OCI-LY7 (cell line): ENCODE measurements at regions of chr14 and their contacts with region 1.

Region 1: GRCh38 chr14:19851365-19851764 is 23.6 kb upstream of the OR4K2 start:
- DNase-seq: no peak
- H3K4me3 ChIP-seq: no peak overlapping the region
- H3K27ac ChIP-seq: no peak overlapping the region
- H3K4me1 ChIP-seq: no peaks in the 10 kb centered on the region
- CTCF ChIP-seq: no peak

Region 2: GRCh38 chr14:19771895-19772430 is 79.4 kb before region 1 on chr14:
- CTCF ChIA-PET with region 1: no interaction called
- POLR2A ChIA-PET with region 1: no interaction called
- intact Hi-C with region 1: no loop called
- DNase-seq: no peak
- H3K4me3 ChIP-seq: no peak overlapping the region
- H3K27ac ChIP-seq: no peak overlapping the region
- H3K4me1 ChIP-seq: no peaks in the 10 kb centered on the region
- CTCF ChIP-seq: no peak

Region 3: GRCh38 chr14:19800282-19801117 is 50.9 kb before region 1 on chr14:
- CTCF ChIA-PET with region 1: no interaction called
- POLR2A ChIA-PET with region 1: no interaction called
- intact Hi-C with region 1: no loop called
- DNase-seq: no peak
- H3K4me3 ChIP-seq: no peak overlapping the region
- H3K27ac ChIP-seq: no peak overlapping the region
- H3K4me1 ChIP-seq: no peaks in the 10 kb centered on the region
- CTCF ChIP-seq: no peak

Region 4: DNA sequence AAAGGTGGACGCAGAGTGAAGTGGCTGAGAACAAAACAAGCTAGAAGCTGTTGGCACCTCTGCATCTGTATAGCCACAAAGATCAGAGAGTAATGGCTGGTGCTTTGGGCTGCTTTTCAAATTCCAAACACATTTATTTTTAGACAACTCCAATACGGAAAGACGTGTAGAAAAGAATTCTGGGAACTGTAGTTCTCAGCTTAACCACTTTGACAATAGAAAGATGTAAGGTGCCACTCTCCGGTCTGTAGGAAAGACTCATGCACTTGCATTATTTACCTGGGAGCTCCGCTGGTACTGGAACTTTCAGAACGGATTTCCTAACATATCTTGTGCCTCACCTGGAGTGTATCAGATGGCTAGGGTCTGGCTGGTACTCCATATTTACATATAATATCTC is 21.8 kb after region 1 on chr14:
- CTCF ChIA-PET with region 1: no interaction called
- POLR2A ChIA-PET with region 1: no interaction called
- intact Hi-C with region 1: loop called (anchors 2 kb)
- DNase-seq: no peak
- H3K4me3 ChIP-seq: no peak overlapping the region
- H3K27ac ChIP-seq: no peak overlapping the region
- H3K4me1 ChIP-seq: no peaks in the 10 kb centered on the region
- CTCF ChIP-seq: no peak

Region 5: DNA sequence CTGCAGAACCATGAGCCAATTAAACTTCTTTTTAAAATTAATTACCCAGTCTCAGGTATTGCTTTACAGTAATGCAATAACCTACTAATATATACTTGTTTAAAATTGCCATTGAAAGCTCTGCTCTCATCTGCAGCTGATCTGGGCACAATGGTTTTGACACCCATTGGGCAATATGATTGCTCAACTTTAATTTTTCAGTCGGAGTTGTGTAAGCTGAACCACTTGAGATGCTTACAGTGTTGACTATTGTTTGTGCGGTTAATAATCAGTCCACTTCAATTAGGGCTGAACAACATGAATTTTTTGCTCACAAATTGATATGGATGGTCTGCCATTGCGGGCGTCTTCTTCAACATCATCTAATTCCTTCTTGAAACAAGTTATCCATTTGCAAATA is 51.0 kb after region 1 on chr14:
- CTCF ChIA-PET with region 1: no interaction called
- POLR2A ChIA-PET with region 1: no interaction called
- intact Hi-C with region 1: loop called (anchors 10 kb)
- DNase-seq: no peak
- H3K4me3 ChIP-seq: no peak overlapping the region
- H3K27ac ChIP-seq: no peak overlapping the region
- H3K4me1 ChIP-seq: no peaks in the 10 kb centered on the region
- CTCF ChIP-seq: no peak

Region 6: DNA sequence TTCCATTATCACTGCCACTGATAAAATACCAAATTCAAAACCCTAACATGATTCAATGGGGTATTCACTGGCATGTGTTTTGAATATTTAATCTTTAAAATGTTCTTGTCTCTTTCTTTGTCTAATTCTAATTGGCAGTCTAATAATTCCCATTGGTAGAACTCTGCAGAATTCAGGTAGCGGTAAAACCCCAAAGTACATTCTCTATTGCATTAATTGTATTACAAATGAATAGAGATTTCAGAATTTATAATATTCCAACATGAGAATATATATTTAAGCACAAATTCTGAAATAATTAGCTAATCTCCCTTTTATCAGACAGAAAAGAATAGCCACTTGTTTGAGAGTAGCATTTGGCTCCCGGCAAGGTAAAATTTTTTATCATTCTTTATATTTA is 287.2 kb after region 1 on chr14 and contains the start of gene OR4N5:
- CTCF ChIA-PET with region 1: no interaction called
- POLR2A ChIA-PET with region 1: no interaction called
- intact Hi-C with region 1: no loop called
- DNase-seq: no peak
- H3K4me3 ChIP-seq: no peak within 1 kb of the TSS
- H3K27ac ChIP-seq: no peak within 1 kb of the TSS
- H3K4me1 ChIP-seq: no peaks in the 10 kb centered on the region
- CTCF ChIP-seq: no peak
- total RNA-seq, gene OR4N5: not detected in 2 replicates